ENCODE measurements at regions of chr1 and their contacts with region 1.

Region 1: DNA sequence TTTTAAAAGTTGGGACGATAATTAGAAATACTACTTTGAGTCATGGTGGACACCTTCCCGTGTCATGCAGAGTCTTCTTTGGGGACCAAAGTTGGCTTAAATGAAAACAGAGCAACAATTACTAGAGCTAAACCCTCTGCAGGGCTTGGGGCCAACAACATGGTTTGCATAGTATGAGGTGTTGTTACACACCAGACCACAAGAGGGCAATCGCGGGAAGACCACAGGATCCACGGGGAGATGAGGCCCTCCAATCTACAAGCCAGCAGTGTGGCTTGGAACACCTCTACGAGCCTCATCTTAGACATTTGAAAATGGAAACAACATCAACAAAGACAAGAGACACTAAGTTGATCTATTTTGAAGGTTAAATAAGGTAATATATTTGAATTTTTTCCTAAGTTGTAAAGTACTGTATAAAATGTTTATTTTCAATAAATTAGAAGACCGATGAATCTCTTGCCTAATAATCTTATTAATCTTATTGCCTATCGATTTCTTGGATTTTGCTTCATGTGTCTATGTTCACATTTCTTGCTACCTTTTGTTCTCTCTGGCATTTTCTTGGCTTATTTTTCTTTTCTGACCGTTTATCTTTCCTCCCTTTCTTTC is 8.2 kb upstream of the SMCP start:
- DNase-seq: peak in 1 of 2 donors; percentile 65
- ATAC-seq: peak; percentile 76
- H3K4me3 ChIP-seq: no peak overlapping the region
- H3K27ac ChIP-seq: no peak overlapping the region
- H3K4me1 ChIP-seq: no peaks in the 10 kb centered on the region
- H3K27me3 ChIP-seq: no peaks in the 10 kb centered on the region

Region 2: DNA sequence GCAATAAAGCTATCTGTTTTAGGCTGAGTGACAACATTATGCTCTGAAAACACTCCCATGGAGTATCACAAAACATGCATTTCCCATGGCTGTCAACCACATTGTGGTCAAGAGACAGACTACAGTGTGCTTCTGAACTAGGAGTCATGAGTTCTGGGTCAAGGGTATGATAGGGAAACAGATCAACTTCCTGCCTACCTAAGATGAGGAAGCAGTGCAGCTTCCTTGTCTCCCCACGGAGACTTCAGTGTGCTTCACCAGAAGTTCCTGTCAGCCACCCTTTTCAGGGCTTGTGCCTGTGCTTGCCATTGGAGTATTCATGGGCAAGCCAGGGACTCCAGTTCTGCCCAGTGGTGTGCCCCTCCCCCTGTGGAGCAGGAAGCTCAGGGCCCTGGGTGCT is 323.2 kb before region 1 on chr1:
- intact Hi-C with region 1: no loop called
- DNase-seq: no peak
- ATAC-seq: no peak
- H3K4me3 ChIP-seq: no peak overlapping the region
- H3K27ac ChIP-seq: no peak overlapping the region
- H3K4me1 ChIP-seq: no peaks in the 10 kb centered on the region
- H3K27me3 ChIP-seq: no peaks in the 10 kb centered on the region

Region 3: GRCh38 chr1:152801333-152801732 is 68.6 kb before region 1 on chr1:
- intact Hi-C with region 1: no loop called
- DNase-seq: no peak
- ATAC-seq: no peak
- H3K4me3 ChIP-seq: no peak overlapping the region
- H3K27ac ChIP-seq: no peak overlapping the region
- H3K4me1 ChIP-seq: no peaks in the 10 kb centered on the region
- H3K27me3 ChIP-seq: no peaks in the 10 kb centered on the region

Region 4: DNA sequence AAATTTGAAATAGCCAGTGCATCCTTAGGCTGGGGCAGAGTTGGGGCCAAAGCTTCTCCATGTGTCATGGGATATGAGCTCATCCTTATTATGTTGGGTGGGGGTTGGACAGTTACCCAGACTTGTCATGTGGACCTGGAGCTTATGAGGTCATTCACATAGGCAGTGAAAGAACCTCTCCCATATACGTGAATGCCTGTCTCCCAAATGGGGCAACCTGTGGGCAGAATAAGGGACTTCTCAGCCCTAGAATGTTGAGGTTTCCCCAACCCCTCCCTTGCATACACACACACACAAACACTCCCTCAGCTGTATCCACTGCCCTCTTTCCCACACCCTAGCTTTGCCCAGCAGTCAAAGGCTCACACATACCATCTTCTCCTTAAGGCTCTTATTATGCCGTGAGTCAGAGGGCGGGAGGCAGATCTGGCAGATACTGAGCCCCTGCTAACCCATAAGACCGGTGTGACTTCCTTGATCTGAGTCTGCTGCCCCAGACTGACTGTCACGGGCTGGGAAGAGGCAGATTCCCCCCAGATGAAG is 36.2 kb after region 1 on chr1:
- intact Hi-C with region 1: no loop called
- DNase-seq: no peak
- ATAC-seq: no peak
- H3K4me3 ChIP-seq: no peak overlapping the region
- H3K27ac ChIP-seq: no peak overlapping the region
- H3K4me1 ChIP-seq: no peaks in the 10 kb centered on the region
- H3K27me3 ChIP-seq: no peaks in the 10 kb centered on the region

Region 5: GRCh38 chr1:152924191-152924590 is 54.3 kb after region 1 on chr1:
- intact Hi-C with region 1: loop called in 1 of 2 experiments (anchors 5 kb)
- DNase-seq: no peak
- ATAC-seq: no peak
- H3K4me3 ChIP-seq: no peak overlapping the region
- H3K27ac ChIP-seq: no peak overlapping the region
- H3K4me1 ChIP-seq: no peaks in the 10 kb centered on the region
- H3K27me3 ChIP-seq: no peaks in the 10 kb centered on the region

Region 6: DNA sequence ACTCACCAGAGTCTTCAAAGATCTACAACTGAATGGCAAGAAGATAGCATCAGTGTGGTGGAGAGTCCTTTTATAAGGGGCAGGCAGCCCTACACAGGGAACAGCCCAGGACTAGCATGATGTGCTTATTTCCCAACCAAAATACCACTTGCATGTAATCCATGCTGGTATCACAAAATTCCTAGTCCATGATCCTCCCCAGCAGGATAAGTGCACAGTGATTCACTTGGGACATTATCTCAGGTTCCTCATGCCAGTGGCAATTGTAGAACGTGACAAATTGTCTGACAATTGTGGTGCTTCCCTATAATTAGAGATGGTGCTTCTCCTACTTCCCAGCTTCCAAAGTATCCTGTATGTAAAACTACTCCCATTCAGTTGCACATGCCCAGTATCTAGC is 280.9 kb after region 1 on chr1 and contains the start of gene SPRR2G:
- intact Hi-C with region 1: no loop called
- DNase-seq: no peak
- ATAC-seq: no peak
- H3K4me3 ChIP-seq: no peak within 1 kb of the TSS
- H3K27ac ChIP-seq: no peak within 1 kb of the TSS
- H3K4me1 ChIP-seq: no peaks in the 10 kb centered on the region
- H3K27me3 ChIP-seq: peaks cover 0 to 1% of the 10 kb centered on the region in 2 donors
- total RNA-seq, gene SPRR2G: not detected

Region 7: GRCh38 chr1:153220606-153221303 is 350.8 kb after region 1 on chr1:
- intact Hi-C with region 1: loop called in 1 of 2 experiments (anchors 5 kb)
- DNase-seq: no peak
- ATAC-seq: no peak
- H3K4me3 ChIP-seq: no peak overlapping the region
- H3K27ac ChIP-seq: no peak overlapping the region
- H3K4me1 ChIP-seq: no peaks in the 10 kb centered on the region
- H3K27me3 ChIP-seq: no peaks in the 10 kb centered on the region

Measured in aorta (tissue), 5 donors.